ENCODE measurements at regions of chr7 and their contacts with region 1.

Region 1: DNA sequence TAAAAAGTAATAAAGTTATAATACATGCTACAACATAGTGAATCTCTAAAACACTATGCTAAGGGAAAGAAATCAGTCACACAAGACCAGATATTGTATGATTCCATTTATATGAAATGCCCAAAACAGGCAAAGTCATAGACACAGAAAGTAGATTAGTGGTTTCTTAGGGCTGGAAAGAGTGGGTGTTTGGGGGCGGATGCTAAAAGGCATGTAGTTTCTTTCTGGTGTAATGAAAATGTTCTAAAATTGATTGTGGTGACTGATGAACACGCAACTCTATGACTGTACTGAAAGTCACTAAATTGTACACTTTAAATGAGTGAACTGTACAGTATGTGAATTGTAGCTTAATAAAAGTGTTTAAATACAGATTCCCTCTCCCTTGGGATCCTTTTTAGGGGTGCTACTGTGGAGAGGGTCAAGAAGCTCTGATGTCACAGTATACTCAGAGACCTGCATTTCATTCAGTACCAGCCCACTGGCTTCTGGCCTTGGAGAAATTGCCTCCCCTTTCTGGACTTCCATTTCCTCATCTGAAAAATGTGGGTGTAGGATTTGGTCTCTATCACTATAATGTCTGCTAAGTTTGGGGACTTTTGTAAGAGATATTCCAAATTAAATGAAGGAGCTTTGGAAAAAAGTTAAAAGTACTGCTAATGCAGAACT is 46.4 kb downstream of the AOAH start:
- DNase-seq: no peak
- H3K4me3 Mint-ChIP-seq: peak overlapping the region; percentile 67
- H3K27ac Mint-ChIP-seq: peak overlapping the region; percentile 89
- H3K4me1 Mint-ChIP-seq: peaks cover 56% of the 10 kb centered on the region
- H3K27me3 Mint-ChIP-seq: no peaks in the 10 kb centered on the region

Region 2: DNA sequence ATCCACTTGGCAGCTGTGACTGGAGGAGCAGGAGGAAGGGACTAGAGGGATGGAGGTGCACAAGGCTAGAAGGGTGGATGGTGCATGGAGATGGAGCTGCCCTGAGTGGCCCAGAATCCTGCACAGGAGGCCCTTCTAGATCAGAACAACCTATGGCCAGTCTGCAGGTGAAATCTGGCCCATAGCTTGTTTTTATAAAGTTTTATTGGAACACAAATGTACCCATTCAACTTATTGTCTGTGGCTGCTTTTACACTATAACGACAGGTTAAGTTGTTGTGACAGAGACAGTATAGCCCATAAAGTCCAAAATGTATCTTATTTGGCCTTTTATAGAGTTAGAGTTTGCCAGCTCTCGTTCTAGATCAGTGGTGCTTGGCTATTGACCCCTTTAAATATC is 427.6 kb before region 1 on chr7:
- intact Hi-C with region 1: no loop called
- DNase-seq: no peak
- H3K4me3 Mint-ChIP-seq: no peak overlapping the region
- H3K27ac Mint-ChIP-seq: no peak overlapping the region
- H3K4me1 Mint-ChIP-seq: no peaks in the 10 kb centered on the region
- H3K27me3 Mint-ChIP-seq: peaks cover 4% of the 10 kb centered on the region

Region 3: GRCh38 chr7:36600869-36601530 is 76.9 kb before region 1 on chr7:
- intact Hi-C with region 1: loop called (anchors 2 kb)
- DNase-seq: peak; percentile 14
- H3K4me3 Mint-ChIP-seq: no peak overlapping the region
- H3K27ac Mint-ChIP-seq: peak overlapping the region; percentile 54
- H3K4me1 Mint-ChIP-seq: peaks cover 70% of the 10 kb centered on the region
- H3K27me3 Mint-ChIP-seq: no peaks in the 10 kb centered on the region

Region 4: GRCh38 chr7:36659172-36659516 is 18.8 kb before region 1 on chr7:
- intact Hi-C with region 1: no loop called
- DNase-seq: no peak
- H3K4me3 Mint-ChIP-seq: no peak overlapping the region
- H3K27ac Mint-ChIP-seq: no peak overlapping the region
- H3K4me1 Mint-ChIP-seq: peaks cover 15% of the 10 kb centered on the region
- H3K27me3 Mint-ChIP-seq: peaks cover 2% of the 10 kb centered on the region

Region 5: DNA sequence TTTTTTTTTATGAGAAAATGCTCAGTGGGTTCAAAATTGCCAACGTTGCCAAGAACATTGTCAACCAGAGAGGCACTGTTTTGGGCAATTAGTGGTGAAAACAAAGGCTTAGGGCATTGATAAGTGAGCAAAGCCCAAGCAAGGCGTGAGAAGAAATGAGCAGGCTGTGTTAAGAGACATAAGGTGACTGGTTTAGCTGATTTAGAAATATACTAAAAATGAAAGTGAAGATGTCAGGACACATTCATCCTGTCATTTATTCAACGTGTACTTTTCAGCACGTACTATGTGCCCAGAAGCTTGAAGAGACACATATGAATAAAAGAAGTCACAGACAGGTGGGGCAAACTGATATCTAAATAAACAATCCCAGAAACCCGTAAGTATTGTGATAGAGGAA is 14.6 kb after region 1 on chr7:
- intact Hi-C with region 1: no loop called
- DNase-seq: no peak
- H3K4me3 Mint-ChIP-seq: peak overlapping the region; percentile 81
- H3K27ac Mint-ChIP-seq: peak overlapping the region; percentile 92
- H3K4me1 Mint-ChIP-seq: peaks cover 39% of the 10 kb centered on the region
- H3K27me3 Mint-ChIP-seq: peaks cover 2% of the 10 kb centered on the region

Region 6: GRCh38 chr7:36784991-36785940 is 107.4 kb after region 1 on chr7:
- intact Hi-C with region 1: loop called (anchors 2 kb)
- DNase-seq: peak; percentile 68
- H3K4me3 Mint-ChIP-seq: peak overlapping the region; percentile 72
- H3K27ac Mint-ChIP-seq: peak overlapping the region; percentile 92
- H3K4me1 Mint-ChIP-seq: peaks cover 74% of the 10 kb centered on the region
- H3K27me3 Mint-ChIP-seq: no peaks in the 10 kb centered on the region

Region 7: DNA sequence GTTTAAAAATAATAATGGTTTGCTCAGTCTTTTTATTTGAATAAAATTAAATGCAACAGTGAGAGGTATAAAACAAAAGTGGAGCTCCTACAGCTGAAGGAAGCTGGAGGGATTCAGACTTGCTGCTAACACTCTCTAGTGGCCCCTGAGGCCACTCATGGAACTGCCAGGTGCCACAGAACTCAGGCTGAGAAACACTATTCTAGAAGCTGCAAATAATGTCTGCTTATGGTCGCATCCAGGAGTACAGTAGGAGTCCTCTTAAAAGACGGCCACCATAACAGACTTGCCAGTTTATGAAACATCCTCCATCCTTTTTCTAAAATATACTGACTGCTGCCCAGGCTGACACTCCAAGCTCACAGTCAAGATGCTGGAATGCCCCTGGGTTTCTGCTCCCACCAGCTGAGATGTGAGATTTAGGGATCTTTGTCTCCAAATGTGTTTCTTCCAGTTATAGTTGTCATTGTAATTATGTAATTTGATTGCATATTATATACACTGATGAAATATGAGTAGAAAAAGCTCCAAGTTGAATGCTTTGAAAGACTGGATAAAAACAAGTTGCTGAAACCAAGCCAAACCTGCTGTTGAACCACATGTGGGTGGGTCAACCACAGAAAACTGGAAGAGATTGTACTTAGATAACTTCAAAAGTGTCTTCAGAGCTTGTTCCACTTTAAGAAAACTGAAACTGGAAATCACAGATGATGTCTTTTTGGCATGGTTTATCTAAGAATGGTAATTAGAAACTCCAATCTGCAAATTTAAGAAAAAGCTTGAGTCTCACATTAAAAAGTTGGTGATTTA is 260.1 kb after region 1 on chr7:
- intact Hi-C with region 1: loop called (anchors 2 kb)
- DNase-seq: peak; percentile 59
- H3K4me3 Mint-ChIP-seq: peak overlapping the region; percentile 49
- H3K27ac Mint-ChIP-seq: peak overlapping the region; percentile 65
- H3K4me1 Mint-ChIP-seq: peaks cover 51% of the 10 kb centered on the region
- H3K27me3 Mint-ChIP-seq: no peaks in the 10 kb centered on the region

Region 8: DNA sequence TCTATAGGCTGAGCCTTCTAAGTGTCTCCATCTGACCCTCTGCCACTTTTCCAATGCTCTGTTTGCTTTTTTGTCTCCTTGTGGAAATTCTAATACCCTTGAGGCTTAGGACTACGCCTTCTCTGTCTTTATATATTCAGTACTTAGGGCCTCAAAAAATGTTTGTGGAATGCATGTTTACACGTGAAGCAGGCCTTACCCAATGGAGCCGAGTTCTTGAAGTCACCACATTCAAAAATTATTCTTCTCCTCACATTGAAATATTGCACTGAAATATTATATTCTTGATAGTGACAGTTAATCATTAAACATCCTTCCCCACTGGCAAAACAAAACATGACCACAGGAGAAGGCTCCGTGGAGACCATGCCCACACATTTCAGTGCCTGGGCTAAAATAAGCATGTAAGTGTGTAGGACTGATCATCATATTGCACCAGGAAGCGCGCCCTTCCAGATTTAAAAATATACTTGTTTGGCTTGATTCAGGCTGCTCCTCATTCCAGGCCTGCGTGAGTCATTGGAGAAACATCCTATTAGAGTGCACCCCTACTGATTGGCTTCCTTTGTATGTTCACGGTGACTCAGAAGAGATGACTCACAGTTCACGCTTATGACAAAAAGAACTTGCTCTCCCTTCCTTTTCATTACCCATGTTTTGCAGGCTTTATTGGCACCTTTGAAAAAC is 353.8 kb after region 1 on chr7:
- intact Hi-C with region 1: loop called (anchors 2 kb)
- DNase-seq: peak; percentile 19
- H3K4me3 Mint-ChIP-seq: no peak overlapping the region
- H3K27ac Mint-ChIP-seq: peak overlapping the region; percentile 69
- H3K4me1 Mint-ChIP-seq: peaks cover 59% of the 10 kb centered on the region
- H3K27me3 Mint-ChIP-seq: no peaks in the 10 kb centered on the region

Region 9: GRCh38 chr7:37186753-37187152 is 508.9 kb after region 1 on chr7:
- intact Hi-C with region 1: loop called (anchors 2 kb)
- DNase-seq: no peak
- H3K4me3 Mint-ChIP-seq: no peak overlapping the region
- H3K27ac Mint-ChIP-seq: no peak overlapping the region
- H3K4me1 Mint-ChIP-seq: peaks cover 11% of the 10 kb centered on the region
- H3K27me3 Mint-ChIP-seq: no peaks in the 10 kb centered on the region

Measured in activated T-helper 1 cell treated with anti-CD3 and anti-CD28 coated beads, Interleukin-12 subunit alpha, Interleukin-12 subunit beta, Interleukin-2, Interleukin-4 antibody, amounts not matched to agents 30 ng/mL and 10 ng/mL and 1 ng/mL, durations not matched to agents 14 hours and 24 hours and 36 hours (primary cell).